Common myeloid progenitor, CD34-positive (primary cell): ENCODE measurements at regions of chr3 and their contacts with region 1.

Region 1: DNA sequence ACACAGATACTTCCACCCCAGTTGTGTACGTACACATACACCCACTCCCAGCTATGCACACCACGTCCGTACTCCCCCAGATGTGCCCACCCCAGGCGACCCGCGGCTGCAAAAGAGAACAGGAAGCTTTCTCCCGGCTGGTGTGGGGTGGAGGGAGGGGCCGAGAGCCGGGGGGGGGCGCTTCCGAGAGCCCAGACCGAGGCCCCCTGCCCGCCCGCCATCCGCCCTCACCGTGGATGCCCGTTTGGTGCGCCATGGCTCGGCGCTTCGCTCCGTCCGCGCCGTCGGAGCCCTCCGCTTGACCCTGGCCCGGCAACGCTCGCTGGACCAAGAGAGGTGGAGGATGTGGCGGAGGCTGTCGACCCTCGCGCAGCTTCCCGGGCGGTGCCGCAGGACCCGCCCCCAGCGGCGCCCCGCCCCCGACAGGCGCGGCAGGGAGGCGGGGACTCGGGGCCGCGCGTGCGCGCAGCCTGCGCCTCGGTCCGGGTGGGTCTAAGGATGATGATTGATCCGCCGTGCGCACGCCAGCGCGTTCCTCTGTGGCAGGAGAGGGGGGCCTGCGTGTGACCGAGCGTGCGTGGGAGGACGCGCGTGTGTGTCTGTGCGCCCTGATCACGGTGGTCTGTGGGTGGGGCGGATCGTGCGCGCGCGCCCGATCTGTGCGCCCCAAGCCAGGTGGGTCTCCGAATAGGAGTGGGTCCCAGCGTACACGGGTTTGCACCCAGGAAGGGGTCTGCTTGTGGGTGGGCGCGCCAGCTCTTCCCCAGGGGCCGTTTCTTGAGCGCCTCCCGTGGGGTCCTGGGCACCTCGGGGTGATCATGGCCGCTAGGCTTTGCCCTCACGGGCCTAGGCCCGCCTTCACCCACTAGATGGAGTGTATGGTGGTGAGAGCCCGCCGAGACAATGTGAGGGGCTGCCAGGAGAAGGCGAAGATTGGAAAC is at the start of gene TWF2:
- DNase-seq: peak; percentile 74 to 86 (median 85)
- H3K4me3 ChIP-seq: peak within 1 kb of the TSS; percentile 66 to 94 (median 84)
- H3K27ac ChIP-seq: peak within 1 kb of the TSS; percentile 64 to 83
- H3K4me1 ChIP-seq: peaks cover 2 to 48% (median 39%) of the 10 kb centered on the region in 4 experiments
- H3K27me3 ChIP-seq: no peaks in the 10 kb centered on the region

Region 2: DNA sequence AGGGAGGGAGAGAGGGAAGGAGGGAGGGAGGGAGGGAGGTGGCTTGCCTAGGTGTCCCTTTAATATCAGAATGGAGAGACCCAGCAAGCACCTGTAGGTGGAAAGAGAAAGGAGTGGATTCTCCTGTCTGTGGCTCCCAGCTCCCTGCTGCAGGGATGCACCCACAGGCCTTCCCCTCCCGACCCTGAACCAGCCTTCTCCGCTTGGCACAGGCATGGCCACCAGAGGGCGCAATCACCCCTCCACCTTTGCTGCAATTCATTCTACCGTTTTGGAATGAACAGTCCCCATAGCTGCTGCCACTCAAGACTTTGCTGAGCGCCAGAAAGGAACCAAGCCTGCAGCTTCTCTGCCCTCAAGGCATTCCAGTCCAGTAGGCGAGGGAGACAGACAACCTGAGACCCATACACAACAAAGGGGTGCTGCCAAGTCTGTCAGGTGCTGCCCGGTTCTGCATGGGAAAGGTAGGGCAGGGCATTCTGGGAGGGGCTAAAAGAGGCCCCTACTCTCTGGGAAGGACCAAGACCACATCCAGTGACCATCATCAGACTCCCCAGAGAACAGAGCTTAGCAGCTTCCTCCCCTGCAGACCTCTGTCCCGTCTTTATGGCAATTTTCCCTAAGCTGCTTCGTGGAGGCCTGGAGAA is 18.5 kb before region 1 on chr3:
- CTCF ChIA-PET with region 1: interaction called, 54 read pairs
- POLR2A ChIA-PET with region 1: interaction called, 3 read pairs
- DNase-seq: peak; percentile 79 to 90 (median 84)
- H3K4me3 ChIP-seq: no peak overlapping the region
- H3K27ac ChIP-seq: no peak overlapping the region
- H3K4me1 ChIP-seq: peaks cover 10 to 80% (median 59%) of the 10 kb centered on the region in 4 experiments
- H3K27me3 ChIP-seq: no peaks in the 10 kb centered on the region

Region 3: DNA sequence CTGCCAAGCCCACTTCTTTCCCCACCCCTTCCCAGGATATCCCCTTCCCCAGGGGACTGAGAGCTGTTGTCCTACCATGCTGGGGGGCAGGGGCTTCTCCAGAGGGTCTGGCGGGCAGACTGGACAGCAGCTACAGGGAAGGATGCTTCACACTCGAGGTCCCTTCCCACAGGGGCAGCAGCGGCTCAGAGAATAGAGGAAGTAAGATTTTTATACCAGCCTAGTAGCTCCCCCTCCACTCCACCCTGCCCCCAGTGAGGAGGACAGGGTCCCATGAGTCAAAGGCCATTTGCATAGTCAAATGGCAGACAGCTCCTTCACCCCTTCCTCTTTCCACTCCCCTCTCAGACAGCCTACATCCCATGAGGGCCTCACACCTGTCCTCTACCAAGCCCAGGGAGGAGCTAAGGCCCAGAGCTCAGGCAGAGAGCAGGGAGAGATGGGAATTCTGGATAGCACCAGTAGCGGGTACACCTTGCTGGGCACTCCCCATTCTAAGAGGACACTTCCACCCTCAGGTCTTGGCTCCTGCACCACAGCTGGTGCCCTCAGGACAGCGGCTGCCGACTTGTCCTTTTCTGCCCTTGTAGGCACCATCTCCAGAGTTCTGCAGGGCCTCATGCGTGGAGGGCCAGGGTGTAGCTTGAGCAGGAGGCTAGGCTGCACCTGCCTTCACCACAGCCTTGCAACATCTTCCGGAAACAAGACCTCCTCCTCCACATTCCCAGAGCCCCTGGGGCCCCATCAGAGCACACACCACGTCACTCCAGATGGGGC is 13.4 kb before region 1 on chr3 and contains the start of gene TLR9:
- CTCF ChIA-PET with region 1: interaction called, 54 read pairs
- POLR2A ChIA-PET with region 1: interaction called, 3 read pairs
- DNase-seq: peak; percentile 71 to 92 (median 92)
- H3K4me3 ChIP-seq: peak within 1 kb of the TSS in 2 of 7 experiments; percentile 19 to 32
- H3K27ac ChIP-seq: peak within 1 kb of the TSS in 1 of 2 experiments; percentile 31
- H3K4me1 ChIP-seq: peaks cover 0 to 45% (median 39%) of the 10 kb centered on the region in 4 experiments
- H3K27me3 ChIP-seq: no peaks in the 10 kb centered on the region

Region 4: DNA sequence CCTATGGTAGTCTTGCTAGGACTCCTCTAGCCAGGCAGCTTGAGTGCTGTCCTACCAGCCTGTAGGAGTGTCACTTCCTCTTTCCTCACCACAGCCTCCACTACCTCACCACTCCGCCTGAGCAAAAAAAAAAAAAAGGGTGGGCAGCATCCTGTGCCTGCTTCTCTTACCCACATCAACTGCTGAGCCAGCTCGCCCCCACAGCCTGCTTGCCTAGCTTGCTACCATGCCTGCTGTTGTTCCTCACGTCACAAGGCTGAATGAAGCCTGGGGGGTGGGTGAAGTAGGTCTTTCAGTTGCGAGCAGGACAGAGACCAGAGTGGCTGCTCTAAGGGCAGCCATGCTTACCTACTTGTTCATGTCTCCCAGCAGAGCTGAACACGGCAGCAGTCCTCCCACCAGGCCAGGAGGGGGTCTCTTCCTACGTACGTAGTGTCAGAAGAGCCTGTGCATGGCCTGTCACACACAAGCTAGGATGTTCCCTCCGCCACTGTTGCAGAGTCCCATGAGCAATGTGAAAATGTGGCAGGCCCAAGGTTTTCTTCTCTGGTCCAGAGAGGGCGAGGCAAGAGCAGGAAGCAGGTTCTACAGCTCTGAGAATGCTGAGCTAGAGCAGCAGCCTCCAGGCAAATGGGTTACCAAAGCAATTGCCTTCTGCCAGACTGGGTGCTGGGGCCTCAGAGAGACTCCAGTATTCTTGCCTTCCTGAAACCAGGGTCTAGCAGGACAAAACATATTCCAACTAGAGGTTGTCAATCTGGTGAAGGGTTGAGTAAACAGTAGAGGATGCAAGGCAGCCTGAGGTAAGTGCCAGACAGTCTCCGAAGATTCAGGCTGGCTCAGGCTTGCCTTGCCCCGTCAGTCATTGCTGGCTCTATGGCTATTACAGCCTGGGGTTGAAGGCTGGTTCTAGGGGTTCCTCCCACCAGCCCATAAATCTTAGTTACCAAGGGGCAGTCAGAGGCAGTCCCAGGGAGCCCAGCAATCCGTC is 14.6 kb after region 1 on chr3:
- CTCF ChIA-PET with region 1: interaction called, 161 read pairs
- POLR2A ChIA-PET with region 1: interaction called, 7 read pairs
- DNase-seq: peak; percentile 94 to 99 (median 98)
- H3K4me3 ChIP-seq: peak overlapping the region in 4 of 7 experiments; percentile 17 to 49 (median 36)
- H3K27ac ChIP-seq: peak overlapping the region; percentile 69 to 78
- H3K4me1 ChIP-seq: peaks cover 7 to 37% (median 23%) of the 10 kb centered on the region in 4 experiments
- H3K27me3 ChIP-seq: no peaks in the 10 kb centered on the region

Region 5: DNA sequence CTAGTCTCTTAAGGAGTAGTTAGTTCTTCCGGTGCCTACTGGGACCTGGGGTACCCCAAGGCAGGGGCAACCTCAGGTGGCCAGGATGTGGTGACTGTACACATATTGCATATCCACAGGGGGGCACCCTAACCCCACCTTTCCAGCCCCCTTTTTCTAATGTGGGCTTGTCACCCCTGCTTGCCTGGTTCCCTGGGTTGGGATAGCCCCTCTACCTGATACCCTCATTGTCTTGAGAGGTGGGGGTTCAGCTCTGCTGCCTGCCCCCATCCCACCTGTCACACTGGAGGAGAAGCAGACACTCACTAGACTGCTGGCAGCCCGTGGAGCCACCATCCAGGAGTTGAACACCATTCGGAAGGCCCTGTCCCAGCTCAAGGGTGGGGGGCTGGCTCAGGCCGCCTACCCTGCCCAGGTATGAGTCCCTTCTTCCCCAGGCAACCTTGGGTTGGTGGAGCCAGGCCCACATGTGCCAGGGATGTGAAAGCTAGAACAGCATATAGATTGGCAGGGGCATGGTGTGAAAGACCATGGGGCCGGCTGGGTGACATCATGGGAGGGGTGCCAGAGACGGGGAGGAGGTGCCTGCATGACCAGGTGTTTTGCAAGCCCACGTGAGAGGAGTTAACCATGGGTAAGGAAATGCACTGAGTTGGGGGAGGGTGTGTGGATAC is 52.6 kb after region 1 on chr3:
- CTCF ChIA-PET with region 1: interaction called, 19 read pairs
- POLR2A ChIA-PET with region 1: interaction called, 4 read pairs
- DNase-seq: peak; percentile 39 to 65 (median 57)
- H3K4me3 ChIP-seq: no peak overlapping the region
- H3K27ac ChIP-seq: no peak overlapping the region
- H3K4me1 ChIP-seq: peaks cover 3 to 33% (median 19%) of the 10 kb centered on the region in 4 experiments
- H3K27me3 ChIP-seq: no peaks in the 10 kb centered on the region

Region 6: GRCh38 chr3:52962160-52962559 is 723.1 kb after region 1 on chr3:
- CTCF ChIA-PET with region 1: no interaction called
- POLR2A ChIA-PET with region 1: no interaction called
- DNase-seq: no peak
- H3K4me3 ChIP-seq: no peak overlapping the region
- H3K27ac ChIP-seq: no peak overlapping the region
- H3K4me1 ChIP-seq: no peaks in the 10 kb centered on the region
- H3K27me3 ChIP-seq: no peaks in the 10 kb centered on the region